Ascending aorta (tissue), 2 donors: ENCODE measurements at regions of chr12 and their contacts with region 1.

Region 1: GRCh38 chr12:7018350-7019042 is at the start of gene LPCAT3:
- DNase-seq: peak; percentile 92 to 99
- H3K4me3 ChIP-seq: peak within 1 kb of the TSS; percentile 66 to 73
- H3K27ac ChIP-seq: peak within 1 kb of the TSS; percentile 87 to 92
- H3K4me1 ChIP-seq: peaks cover 5% of the 10 kb centered on the region in 2 donors
- H3K27me3 ChIP-seq: no peaks in the 10 kb centered on the region
- CTCF ChIP-seq: peak; percentile 83 to 92 (median 90)
- total RNA-seq, gene LPCAT3: 23.0 TPM

Region 2: GRCh38 chr12:6927379-6928024 is 91.0 kb before region 1 on chr12 and contains the start of gene ATN1:
- intact Hi-C with region 1: loop called (anchors 5 kb)
- DNase-seq: peak in 1 of 2 donors; percentile 91
- H3K4me3 ChIP-seq: peak within 1 kb of the TSS; percentile 92 to 99
- H3K27ac ChIP-seq: peak within 1 kb of the TSS; percentile 97 to 99
- H3K4me1 ChIP-seq: peaks cover 27 to 40% of the 10 kb centered on the region in 2 donors
- H3K27me3 ChIP-seq: no peaks in the 10 kb centered on the region
- CTCF ChIP-seq: no peak
- total RNA-seq, gene ATN1: 207 TPM

Region 3: DNA sequence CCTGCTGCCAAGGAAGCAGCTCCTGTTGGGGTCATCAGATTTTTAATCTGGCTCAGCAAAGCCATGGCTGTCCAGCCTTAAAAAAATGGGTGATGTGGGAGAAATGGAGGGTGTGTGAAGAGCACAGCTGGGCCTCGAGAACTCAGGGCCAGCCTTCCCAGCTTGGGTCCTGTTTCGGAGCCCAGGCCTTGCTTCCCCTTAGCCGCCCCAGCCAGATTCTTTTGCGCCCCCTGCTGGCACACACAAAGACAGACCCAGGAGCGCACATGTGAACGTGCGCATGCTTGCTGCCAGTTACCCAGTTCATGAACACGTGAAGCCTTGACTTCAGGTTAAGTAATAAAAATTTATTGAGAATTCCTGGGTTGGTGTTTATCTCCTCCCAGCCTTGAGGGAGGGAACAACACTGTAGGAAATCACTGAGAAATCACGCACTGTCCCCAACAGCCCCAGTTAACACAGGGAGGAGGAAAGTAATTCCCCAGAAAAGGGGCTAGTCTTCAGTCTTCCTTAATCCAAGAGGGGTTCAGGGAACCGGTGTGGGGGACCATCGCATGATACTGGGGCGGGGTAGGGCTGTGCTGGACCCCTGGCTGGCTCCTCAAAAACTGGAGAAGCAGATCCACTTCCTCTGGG is 53.4 kb before region 1 on chr12:
- intact Hi-C with region 1: loop called (anchors 1 kb)
- DNase-seq: peak in 1 of 2 donors; percentile 90
- H3K4me3 ChIP-seq: no peak overlapping the region
- H3K27ac ChIP-seq: peak overlapping the region; percentile 64 to 75
- H3K4me1 ChIP-seq: peaks cover 0 to 28% of the 10 kb centered on the region in 2 donors
- H3K27me3 ChIP-seq: no peaks in the 10 kb centered on the region
- CTCF ChIP-seq: peak; percentile 82 to 88 (median 84)

Region 4: GRCh38 chr12:7047306-7047705 is 28.8 kb after region 1 on chr12:
- intact Hi-C with region 1: no loop called
- DNase-seq: no peak
- H3K4me3 ChIP-seq: no peak overlapping the region
- H3K27ac ChIP-seq: no peak overlapping the region
- H3K4me1 ChIP-seq: no peaks in the 10 kb centered on the region
- H3K27me3 ChIP-seq: no peaks in the 10 kb centered on the region
- CTCF ChIP-seq: no peak

Region 5: DNA sequence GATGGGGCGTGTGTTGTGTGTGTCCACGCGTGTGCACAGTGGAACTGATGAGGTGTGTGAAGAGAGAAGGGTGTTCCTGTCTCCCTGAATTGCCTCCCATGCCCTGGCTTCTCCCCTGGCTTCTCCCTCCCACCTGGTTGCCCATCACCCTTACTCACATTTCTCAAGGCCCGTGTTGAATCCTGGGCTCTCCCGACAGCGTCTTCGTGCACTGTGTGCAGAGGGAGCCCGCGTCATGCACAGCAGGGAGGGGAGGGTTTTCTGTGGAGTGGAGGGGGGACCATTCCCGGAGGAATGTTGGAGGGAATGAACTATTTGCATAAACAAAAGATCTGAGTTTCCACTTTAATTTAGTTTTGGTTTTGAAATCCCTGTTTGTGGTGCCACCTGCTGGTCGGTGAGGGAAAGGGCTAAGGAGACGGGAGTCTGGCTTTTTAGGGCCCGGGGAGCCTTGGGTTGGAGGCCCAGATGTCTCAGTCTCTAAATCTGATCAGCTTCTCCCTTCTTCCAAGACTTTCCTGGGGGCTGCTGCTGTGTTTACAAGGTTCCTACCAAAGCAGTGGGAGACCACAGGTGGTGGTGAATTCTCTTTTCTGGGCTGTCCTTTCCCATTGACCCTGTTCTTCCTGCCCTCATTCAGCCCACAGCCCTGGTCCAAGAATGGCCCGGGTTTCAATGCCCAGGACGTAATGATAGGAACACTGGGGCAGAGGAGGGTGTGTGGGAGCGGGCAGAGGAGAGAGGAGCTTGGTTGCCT is 73.9 kb after region 1 on chr12 and contains the start of gene C1R:
- intact Hi-C with region 1: loop called (anchors 5 kb)
- DNase-seq: peak; percentile 48 to 92
- H3K4me3 ChIP-seq: peak within 1 kb of the TSS; percentile 51 to 62
- H3K27ac ChIP-seq: peak within 1 kb of the TSS; percentile 77 to 79
- H3K4me1 ChIP-seq: peaks cover 0 to 12% of the 10 kb centered on the region in 2 donors
- H3K27me3 ChIP-seq: no peaks in the 10 kb centered on the region
- CTCF ChIP-seq: peak; percentile 86 to 91 (median 87)
- total RNA-seq, gene C1R: 1,046 TPM

Region 6: GRCh38 chr12:7188562-7189397 is 170.3 kb after region 1 on chr12:
- intact Hi-C with region 1: loop called (anchors 1 kb)
- DNase-seq: peak; percentile 33 to 88
- H3K4me3 ChIP-seq: peak overlapping the region; percentile 78 to 86
- H3K27ac ChIP-seq: peak overlapping the region; percentile 94 to 98
- H3K4me1 ChIP-seq: peaks cover 0 to 11% of the 10 kb centered on the region in 2 donors
- H3K27me3 ChIP-seq: no peaks in the 10 kb centered on the region
- CTCF ChIP-seq: peak; percentile 30 to 63 (median 59)

Region 7: GRCh38 chr12:7265243-7265642 is 246.7 kb after region 1 on chr12:
- intact Hi-C with region 1: no loop called
- DNase-seq: no peak
- H3K4me3 ChIP-seq: no peak overlapping the region
- H3K27ac ChIP-seq: no peak overlapping the region
- H3K4me1 ChIP-seq: no peaks in the 10 kb centered on the region
- H3K27me3 ChIP-seq: no peaks in the 10 kb centered on the region
- CTCF ChIP-seq: no peak